Activated T-helper 1 cell treated with anti-CD3 and anti-CD28 coated beads, Interleukin-12 subunit alpha, Interleukin-12 subunit beta, Interleukin-2, Interleukin-4 antibody, amounts not matched to agents 30 ng/mL and 10 ng/mL and 1 ng/mL, durations not matched to agents 14 hours and 24 hours and 36 hours (primary cell): ENCODE measurements at regions of chr13 and their contacts with region 1.

Region 1: GRCh38 chr13:72781451-72782439 is at the starts of genes DIS3 and PIBF1:
- DNase-seq: peak; percentile 97
- H3K4me3 Mint-ChIP-seq: peak within 1 kb of the TSS; percentile 100
- H3K27ac Mint-ChIP-seq: peak within 1 kb of the TSS; percentile 100
- H3K4me1 Mint-ChIP-seq: peaks cover 65% of the 10 kb centered on the region
- H3K27me3 Mint-ChIP-seq: no peaks in the 10 kb centered on the region
- total RNA-seq, gene DIS3: 49.9 and 55.4 TPM in 2 replicates
- total RNA-seq, gene PIBF1: 20.9 and 21.2 TPM in 2 replicates

Region 2: DNA sequence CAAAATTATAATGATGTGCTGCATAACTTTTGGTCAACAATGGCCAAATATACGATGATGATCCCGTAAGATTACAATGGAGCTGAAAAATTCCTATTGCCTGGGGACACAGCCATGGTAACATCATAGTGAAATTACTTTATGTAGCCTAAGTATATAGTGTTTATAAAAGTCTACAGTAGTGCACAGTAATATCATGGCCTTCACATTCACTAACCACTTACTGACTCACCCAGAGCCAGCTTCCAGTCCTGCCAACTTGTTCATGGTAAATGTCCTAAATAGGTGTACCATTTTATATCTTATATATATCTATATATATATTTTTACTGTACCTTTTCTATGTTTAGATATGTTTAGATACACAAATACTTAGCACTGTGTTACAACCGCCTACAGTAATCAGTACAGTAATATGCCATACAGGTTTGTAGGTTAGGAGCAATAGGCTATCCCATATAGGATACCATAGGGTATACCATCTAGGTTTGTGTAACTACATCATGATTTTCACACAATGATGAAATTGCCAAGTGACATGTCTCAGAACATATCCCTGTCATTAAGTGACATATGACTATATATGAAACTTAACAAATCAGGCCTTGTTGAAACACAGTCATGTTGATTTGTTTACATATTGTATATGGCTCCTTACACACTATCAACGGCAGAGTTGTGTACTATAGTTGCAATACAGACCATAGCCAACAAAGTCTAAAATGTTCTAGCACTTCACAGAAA is 23.8 kb before region 1 on chr13:
- intact Hi-C with region 1: loop called (anchors 2 kb)
- DNase-seq: no peak
- H3K4me3 Mint-ChIP-seq: no peak overlapping the region
- H3K27ac Mint-ChIP-seq: no peak overlapping the region
- H3K4me1 Mint-ChIP-seq: no peaks in the 10 kb centered on the region
- H3K27me3 Mint-ChIP-seq: no peaks in the 10 kb centered on the region

Region 3: DNA sequence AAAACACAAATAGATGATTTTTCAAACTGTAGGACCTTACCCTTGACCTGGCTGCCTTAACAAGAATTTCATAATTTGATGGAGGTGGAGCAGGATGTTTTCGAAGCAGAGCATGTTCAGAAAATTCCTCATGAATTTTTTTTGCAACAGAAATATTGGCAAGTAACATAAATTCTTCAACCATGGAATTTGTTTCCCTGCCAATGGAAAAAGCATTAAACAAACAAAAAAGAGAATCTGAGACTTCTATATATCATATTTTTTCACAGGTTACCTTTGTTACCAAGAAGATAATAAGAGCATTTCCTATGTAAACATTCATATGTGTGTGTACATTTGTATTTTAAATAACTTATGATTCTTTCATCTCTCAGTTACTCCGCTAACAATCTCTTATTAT is 18.3 kb before region 1 on chr13:
- intact Hi-C with region 1: loop called (anchors 2 kb)
- DNase-seq: no peak
- H3K4me3 Mint-ChIP-seq: no peak overlapping the region
- H3K27ac Mint-ChIP-seq: no peak overlapping the region
- H3K4me1 Mint-ChIP-seq: peaks cover 9% of the 10 kb centered on the region
- H3K27me3 Mint-ChIP-seq: no peaks in the 10 kb centered on the region

Region 4: DNA sequence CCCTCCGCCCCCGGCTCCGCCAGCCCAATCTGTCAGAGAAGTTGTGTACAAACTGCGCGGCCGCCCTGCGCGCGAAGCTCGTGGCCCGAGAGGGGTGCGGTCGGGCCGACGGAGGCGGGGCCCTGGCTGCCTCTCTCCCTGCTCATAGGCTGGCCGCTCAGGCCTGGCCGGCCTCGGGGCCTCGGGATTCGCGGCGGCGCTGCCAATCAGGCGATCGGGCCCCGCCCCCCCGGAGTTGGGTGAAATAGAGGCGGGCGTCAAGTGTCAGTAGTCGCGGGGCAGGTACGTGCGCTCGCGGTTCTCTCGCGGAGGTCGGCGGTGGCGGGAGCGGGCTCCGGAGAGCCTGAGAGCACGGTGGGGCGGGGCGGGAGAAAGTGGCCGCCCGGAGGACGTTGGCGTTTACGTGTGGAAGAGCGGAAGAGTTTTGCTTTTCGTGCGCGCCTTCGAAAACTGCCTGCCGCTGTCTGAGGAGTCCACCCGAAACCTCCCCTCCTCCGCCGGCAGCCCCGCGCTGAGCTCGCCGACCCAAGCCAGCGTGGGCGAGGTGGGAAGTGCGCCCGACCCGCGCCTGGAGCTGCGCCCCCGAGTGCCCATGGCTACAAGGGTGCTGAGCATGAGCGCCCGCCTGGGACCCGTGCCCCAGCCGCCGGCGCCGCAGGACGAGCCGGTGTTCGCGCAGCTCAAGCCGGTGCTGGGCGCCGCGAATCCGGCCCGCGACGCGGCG is 277.2 kb after region 1 on chr13 and contains the start of gene KLF5:
- intact Hi-C with region 1: loop called (anchors 2 kb)
- DNase-seq: peak; percentile 97
- H3K4me3 Mint-ChIP-seq: peak within 1 kb of the TSS; percentile 82
- H3K27ac Mint-ChIP-seq: peak within 1 kb of the TSS; percentile 74
- H3K4me1 Mint-ChIP-seq: peaks cover 20% of the 10 kb centered on the region
- H3K27me3 Mint-ChIP-seq: peaks cover 51% of the 10 kb centered on the region
- total RNA-seq, gene KLF5: 2.4 and 2.5 TPM in 2 replicates

Region 5: DNA sequence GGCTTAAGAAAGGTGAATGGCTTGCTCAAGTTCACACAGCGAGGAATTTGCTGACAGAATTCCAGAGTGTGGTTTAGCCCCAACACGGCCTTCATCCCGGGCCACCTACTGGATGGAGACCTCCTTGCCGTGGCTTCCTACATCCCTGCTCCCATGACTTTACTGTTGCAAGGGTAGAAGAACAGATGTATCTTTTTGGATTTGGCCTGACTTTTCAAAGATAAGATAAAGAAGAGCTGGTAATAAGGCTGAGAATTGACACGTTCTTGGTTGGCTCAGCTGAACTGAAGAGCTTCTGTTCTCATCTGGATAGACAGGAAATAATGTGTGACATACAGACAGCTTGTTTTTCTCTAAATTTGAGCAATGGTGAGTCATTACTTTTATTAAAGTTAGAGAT is 390.2 kb after region 1 on chr13:
- intact Hi-C with region 1: no loop called
- DNase-seq: no peak
- H3K4me3 Mint-ChIP-seq: no peak overlapping the region
- H3K27ac Mint-ChIP-seq: no peak overlapping the region
- H3K4me1 Mint-ChIP-seq: no peaks in the 10 kb centered on the region
- H3K27me3 Mint-ChIP-seq: no peaks in the 10 kb centered on the region